Lower leg skin (tissue), 4 donors: ENCODE measurements at regions of chr4 and their contacts with region 1.

Region 1: DNA sequence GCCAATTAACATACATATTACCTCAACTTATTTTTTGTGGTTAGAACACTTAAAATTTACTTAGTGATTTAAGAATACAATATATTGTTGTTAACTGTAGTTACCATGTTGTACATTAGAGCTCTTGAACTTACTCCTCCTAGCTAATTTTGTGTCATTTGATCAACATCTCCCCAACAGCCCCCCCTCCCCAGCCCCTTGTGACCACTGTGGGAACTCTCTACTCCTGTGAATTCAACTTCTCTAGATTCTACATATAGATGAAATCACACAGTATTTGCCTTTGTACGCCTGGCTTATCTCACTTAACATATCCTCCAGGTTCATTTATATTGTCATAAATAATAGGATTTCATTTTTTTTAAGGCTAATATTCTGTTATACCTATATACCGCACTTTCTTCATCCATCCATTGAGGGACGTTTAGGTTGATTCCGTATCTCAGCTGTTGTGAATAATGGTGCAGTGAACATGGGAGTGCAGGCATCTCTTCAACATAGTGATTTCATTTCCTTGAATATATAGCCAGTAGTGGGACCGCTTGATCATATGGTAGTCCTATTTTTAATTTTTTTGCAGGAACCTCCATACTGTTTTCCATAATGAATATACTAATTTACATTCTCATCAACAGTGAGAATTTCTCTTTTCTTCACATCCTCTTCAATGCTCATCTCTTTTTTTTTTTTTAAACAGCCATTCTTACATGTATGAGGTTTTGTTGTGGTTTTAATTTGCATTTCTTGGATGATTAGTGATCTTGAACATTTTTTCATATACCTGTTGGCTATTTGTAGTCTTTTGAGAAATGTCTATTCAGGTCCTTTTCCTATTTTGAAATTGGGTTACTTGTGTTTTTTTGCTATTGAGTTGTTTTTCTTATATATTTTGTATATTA is 66.8 kb downstream of the RAPGEF2 start:
- DNase-seq: no peak
- H3K4me3 ChIP-seq: no peak overlapping the region
- CTCF ChIP-seq: no peak
- POLR2A ChIP-seq: no peak

Region 2: GRCh38 chr4:158850800-158851644 is 318.6 kb before region 1 on chr4:
- intact Hi-C with region 1: loop called (anchors 5 kb)
- DNase-seq: peak in 1 of 2 donors; percentile 49
- H3K4me3 ChIP-seq: no peak overlapping the region
- CTCF ChIP-seq: no peak
- POLR2A ChIP-seq: no peak

Region 3: DNA sequence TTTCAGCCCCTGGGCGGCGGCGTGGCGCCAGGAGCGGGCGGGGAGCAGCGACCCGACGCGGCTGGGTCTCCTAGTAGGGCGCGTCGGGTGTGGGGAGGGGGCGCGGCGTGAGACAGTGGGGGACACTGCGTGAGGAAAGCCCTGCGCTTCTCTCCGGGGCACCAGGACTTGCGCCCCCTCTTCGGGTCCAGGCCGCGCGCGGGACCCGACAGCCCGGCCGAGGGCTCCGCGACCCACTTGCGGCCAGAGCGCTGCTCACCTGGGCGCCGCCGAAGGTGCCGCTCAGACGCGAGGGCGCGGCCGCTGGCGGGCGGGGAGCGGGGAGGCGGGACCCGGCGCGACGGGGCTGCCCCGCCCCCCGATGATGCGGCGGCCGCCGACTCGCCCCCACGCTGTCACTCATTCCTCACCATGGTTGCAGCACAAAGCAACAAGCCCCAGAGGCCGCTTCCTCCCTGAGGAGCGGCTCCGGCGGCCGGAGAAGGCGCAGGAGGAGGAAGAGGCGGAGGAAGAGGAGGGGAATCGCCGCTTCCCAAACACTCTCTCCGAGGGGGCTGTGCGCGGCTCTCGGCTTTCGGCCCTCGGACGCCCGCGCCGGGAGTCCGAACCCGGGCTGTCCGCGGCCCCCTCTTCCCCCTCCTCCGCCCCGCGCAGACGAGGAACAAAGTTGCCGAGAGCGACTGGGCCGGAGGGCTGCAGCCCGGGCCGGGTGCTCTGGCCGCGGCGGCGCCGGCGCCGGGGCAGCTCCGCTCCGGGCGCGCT is 66.8 kb before region 1 on chr4 and contains the start of gene RAPGEF2:
- intact Hi-C with region 1: no loop called
- DNase-seq: peak; percentile 90 to 98
- H3K4me3 ChIP-seq: peak within 1 kb of the TSS; percentile 91
- CTCF ChIP-seq: no peak
- POLR2A ChIP-seq: peak in 1 of 2 donors; percentile 8
- total RNA-seq, gene RAPGEF2: 38.3 to 51.7 (median 40.4) TPM

Region 4: GRCh38 chr4:159516556-159517140 is 347.0 kb after region 1 on chr4:
- intact Hi-C with region 1: no loop called
- DNase-seq: no peak
- H3K4me3 ChIP-seq: no peak overlapping the region
- CTCF ChIP-seq: no peak
- POLR2A ChIP-seq: no peak